H1 (cell line): ENCODE measurements at regions of chr3 and their contacts with region 1.

Region 1: GRCh38 chr3:128322066-128323022 is 144.3 kb downstream of the DNAJB8 start:
- DNase-seq: peak; percentile 17 to 85
- H3K4me3 ChIP-seq: no peak overlapping the region
- H3K27ac ChIP-seq: no peak overlapping the region
- H3K4me1 ChIP-seq: peaks cover 0 to 4% (median 0%) of the 10 kb centered on the region in 4 experiments; a peak in 2 of 7 replicates
- H3K27me3 ChIP-seq: no peaks in the 10 kb centered on the region
- CTCF ChIP-seq: peak in 2 of 3 experiments; percentile 89 to 90; a peak in 3 of 4 replicates
- EP300 ChIP-seq: no peak
- POLR2A ChIP-seq: no peak
- RAD21 ChIP-seq: peak; percentile 76 to 86

Region 2: DNA sequence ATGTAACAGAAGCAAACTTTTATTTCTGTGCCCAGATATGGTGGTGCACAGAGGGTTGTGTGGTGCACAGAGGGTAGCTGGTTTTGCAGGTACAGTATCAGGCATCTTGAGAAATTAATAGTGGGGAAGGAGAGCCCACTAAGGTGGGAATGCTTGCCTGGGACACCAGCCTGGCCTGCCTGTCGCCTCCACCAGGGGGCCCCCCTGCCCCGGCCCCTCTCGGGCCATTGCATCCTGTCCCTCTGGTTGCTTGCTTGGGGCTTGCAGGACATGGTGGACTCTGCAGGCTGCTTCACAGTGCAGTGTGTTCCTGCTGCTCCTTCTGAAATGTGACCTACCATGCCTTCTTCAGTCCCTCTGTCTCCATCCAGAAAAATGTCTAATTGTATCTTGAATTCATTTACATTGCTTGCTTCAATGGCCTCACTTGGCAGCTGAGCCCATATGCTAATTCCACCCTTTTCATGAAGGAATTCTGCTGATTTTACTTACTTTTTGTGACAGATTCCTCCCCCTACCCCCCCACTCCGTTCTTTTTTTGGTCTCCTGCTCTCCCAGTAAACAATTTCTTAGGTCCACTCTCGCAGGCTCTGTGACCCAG is 95.4 kb before region 1 on chr3:
- CTCF ChIA-PET with region 1: interaction called, 108 read pairs
- POLR2A ChIA-PET with region 1: no interaction called
- DNase-seq: peak; percentile 29 to 88
- H3K4me3 ChIP-seq: no peak overlapping the region
- H3K27ac ChIP-seq: no peak overlapping the region
- H3K4me1 ChIP-seq: peaks cover 2 to 3% (median 2%) of the 10 kb centered on the region in 4 experiments; a peak in 5 of 7 replicates
- H3K27me3 ChIP-seq: no peaks in the 10 kb centered on the region; a peak in 1 of 7 replicates
- CTCF ChIP-seq: peak; percentile 89 to 97 (median 90)
- EP300 ChIP-seq: no peak
- POLR2A ChIP-seq: no peak
- RAD21 ChIP-seq: peak; percentile 81 to 91

Region 3: DNA sequence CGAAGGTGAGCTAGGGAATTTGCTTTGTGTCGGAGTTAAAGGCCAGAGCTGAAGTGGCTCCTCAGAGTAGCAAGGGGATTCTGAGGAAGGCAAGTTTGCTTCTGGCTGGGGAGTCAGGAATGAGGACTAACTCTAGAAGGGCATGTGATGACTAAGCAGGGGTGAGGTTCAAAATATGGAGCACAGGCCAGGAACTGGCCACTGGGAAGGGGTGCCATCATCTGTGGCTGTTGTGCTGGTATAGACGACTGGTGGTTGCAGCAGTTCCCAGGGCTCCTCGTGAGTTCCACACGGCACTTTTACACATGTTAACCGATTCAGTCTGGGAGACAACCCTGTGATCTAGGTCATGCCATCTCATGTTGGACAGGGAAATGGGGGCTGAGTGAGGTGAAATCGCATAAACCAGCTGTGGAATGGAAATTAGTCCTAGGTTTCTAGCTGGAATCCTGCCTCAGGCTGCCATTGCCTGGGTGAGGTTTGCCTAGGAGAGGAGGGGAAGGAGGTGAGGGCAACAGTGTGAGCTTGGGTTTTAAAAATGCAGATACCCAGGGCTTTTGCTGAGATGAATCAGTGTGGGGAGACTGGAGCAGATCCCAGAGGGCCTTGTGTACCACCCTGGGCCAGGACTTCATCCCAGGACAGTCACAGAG is 68.1 kb before region 1 on chr3:
- CTCF ChIA-PET with region 1: interaction called, 63 read pairs
- POLR2A ChIA-PET with region 1: interaction called, 3 read pairs
- DNase-seq: no peak
- H3K4me3 ChIP-seq: no peak overlapping the region
- H3K27ac ChIP-seq: no peak overlapping the region
- H3K4me1 ChIP-seq: 0 out of 7 replicates have a peak, but pooled peaks cover 0 to 5% (median 0%) of the 10 kb centered on the region in 4 experiments
- H3K27me3 ChIP-seq: no peaks in the 10 kb centered on the region
- CTCF ChIP-seq: no peak
- EP300 ChIP-seq: no peak
- POLR2A ChIP-seq: no peak
- RAD21 ChIP-seq: no peak

Region 4: DNA sequence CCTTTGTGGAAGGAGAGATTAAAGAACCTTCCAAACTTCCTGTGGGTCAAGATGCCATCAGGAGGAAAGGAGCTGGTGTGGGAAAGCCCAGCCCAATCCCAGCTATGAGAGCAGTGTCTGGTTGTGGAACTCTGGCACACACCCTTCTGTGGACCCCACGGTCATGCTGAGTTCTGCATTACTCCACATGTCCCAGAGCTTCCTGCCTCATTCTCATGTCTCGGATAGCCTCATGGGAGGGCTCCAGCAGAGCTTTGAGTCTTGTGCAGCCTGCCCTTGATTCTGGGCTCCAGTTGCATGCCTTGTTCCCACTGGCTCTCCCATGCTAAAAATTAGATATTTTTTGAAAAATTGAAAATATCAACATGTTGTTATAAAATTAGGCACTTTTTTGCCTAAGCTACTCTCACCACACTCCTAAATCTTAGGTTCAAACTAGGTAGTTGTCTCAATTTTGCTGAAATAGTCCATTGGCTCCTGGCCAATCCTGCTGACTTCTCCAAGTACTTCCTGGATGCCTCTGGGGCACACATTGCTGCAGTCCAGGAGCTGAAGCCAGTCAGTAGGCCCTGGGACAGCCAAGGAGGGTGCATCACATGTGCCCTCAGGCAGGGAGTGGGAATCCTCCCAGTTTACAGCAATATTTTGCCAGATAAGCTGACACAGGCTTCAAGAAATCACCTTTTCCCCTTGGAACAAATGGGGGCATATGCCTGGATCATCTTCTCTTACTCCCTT is 24.8 kb before region 1 on chr3:
- CTCF ChIA-PET with region 1: interaction called, 22 read pairs
- POLR2A ChIA-PET with region 1: no interaction called
- DNase-seq: peak in 1 of 2 experiments; percentile 23
- H3K4me3 ChIP-seq: no peak overlapping the region
- H3K27ac ChIP-seq: no peak overlapping the region
- H3K4me1 ChIP-seq: no peaks in the 10 kb centered on the region
- H3K27me3 ChIP-seq: no peaks in the 10 kb centered on the region
- CTCF ChIP-seq: no peak
- EP300 ChIP-seq: no peak
- POLR2A ChIP-seq: no peak
- RAD21 ChIP-seq: no peak

Region 5: GRCh38 chr3:128343287-128344051 is 21.1 kb after region 1 on chr3:
- CTCF ChIA-PET with region 1: interaction called, 15 read pairs
- POLR2A ChIA-PET with region 1: no interaction called
- DNase-seq: no peak
- H3K4me3 ChIP-seq: no peak overlapping the region
- H3K27ac ChIP-seq: no peak overlapping the region
- H3K4me1 ChIP-seq: peaks cover 0 to under 1% (median 0%) of the 10 kb centered on the region in 4 experiments; a peak in 2 of 7 replicates
- H3K27me3 ChIP-seq: no peaks in the 10 kb centered on the region
- CTCF ChIP-seq: no peak
- EP300 ChIP-seq: no peak
- POLR2A ChIP-seq: no peak
- RAD21 ChIP-seq: no peak

Region 6: GRCh38 chr3:128383316-128384235 is 61.2 kb after region 1 on chr3:
- CTCF ChIA-PET with region 1: interaction called, 10 read pairs
- POLR2A ChIA-PET with region 1: no interaction called
- DNase-seq: no peak
- H3K4me3 ChIP-seq: no peak overlapping the region
- H3K27ac ChIP-seq: no peak overlapping the region
- H3K4me1 ChIP-seq: no peaks in the 10 kb centered on the region
- H3K27me3 ChIP-seq: no peaks in the 10 kb centered on the region
- CTCF ChIP-seq: no peak
- EP300 ChIP-seq: no peak
- POLR2A ChIP-seq: no peak
- RAD21 ChIP-seq: no peak